GM10248 (cell line): ENCODE measurements at regions of chr4 and their contacts with region 1.

Region 1: GRCh38 chr4:105293360-105293759 is 146.7 kb downstream of the TET2 start:
- DNase-seq: no peak
- CTCF ChIP-seq: no peak

Region 2: GRCh38 chr4:105348719-105349118 is 55.4 kb after region 1 on chr4:
- CTCF ChIA-PET with region 1: no interaction called
- POLR2A ChIA-PET with region 1: interaction called, 10 read pairs
- DNase-seq: no peak
- CTCF ChIP-seq: no peak